A673 (cell line): ENCODE measurements at regions of chr9 and their contacts with region 1.

Region 1: DNA sequence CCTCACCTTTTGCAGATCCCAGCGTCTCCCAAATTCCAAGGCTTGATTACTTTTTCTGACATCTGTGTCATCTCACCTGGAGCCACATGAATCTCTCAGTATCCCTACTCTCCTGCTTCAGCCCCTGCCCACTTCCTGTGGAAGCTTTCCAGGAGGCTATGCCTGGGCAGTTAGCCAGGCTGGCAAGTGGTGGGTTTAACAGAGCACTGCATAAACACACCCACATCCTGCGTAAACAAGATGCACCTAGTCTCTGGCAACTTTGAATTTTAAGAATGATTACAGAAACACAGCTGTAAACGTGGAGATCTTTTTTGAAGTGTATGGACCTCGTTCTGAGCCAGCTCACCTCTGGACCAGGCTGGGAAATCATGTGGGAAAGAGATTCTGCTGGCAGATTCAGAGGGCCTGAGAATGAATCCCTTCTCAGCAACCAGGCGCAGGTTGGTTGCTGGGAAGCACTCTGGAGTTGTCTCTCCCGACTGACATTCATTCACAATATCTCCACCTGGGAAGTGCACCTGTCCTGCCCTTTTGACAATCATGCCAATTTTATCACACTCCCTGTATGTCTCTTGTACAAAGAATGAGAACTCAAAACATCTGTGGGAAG is 55.7 kb upstream of the FANCC start:
- DNase-seq: peak; percentile 60
- H3K4me3 ChIP-seq: no peak overlapping the region
- H3K27ac ChIP-seq: no peak overlapping the region
- H3K4me1 ChIP-seq: peaks cover 18% of the 10 kb centered on the region
- H3K27me3 ChIP-seq: no peaks in the 10 kb centered on the region
- CTCF ChIP-seq: no peak

Region 2: GRCh38 chr9:95157481-95158151 is 215.6 kb before region 1 on chr9:
- CTCF ChIA-PET with region 1: no interaction called
- POLR2A ChIA-PET with region 1: interaction called, 14 read pairs
- intact Hi-C with region 1: no loop called
- DNase-seq: peak; percentile 92
- H3K4me3 ChIP-seq: no peak overlapping the region
- H3K27ac ChIP-seq: no peak overlapping the region
- H3K4me1 ChIP-seq: peaks cover 17% of the 10 kb centered on the region
- H3K27me3 ChIP-seq: no peaks in the 10 kb centered on the region
- CTCF ChIP-seq: no peak